ENCODE measurements at regions of chr5 and their contacts with region 1.

Region 1: GRCh38 chr5:127030259-127031146 is at the start of gene MARCHF3:
- DNase-seq: peak; percentile 97 to 98 (median 98)
- ATAC-seq: peak; percentile 94
- H3K4me3 ChIP-seq: peak within 1 kb of the TSS; percentile 89
- H3K27ac ChIP-seq: peak within 1 kb of the TSS; percentile 89
- H3K4me1 ChIP-seq: peaks cover 26 to 31% of the 10 kb centered on the region in 2 experiments
- H3K27me3 ChIP-seq: no peaks in the 10 kb centered on the region
- CTCF ChIP-seq: peak; percentile 46 to 57 (median 49); a peak in 5 of 6 replicates
- EP300 ChIP-seq: no peak
- POLR2A ChIP-seq: peak; percentile 97
- RAD21 ChIP-seq: peak; percentile 5 to 33; a peak in 3 of 4 replicates
- polyA plus RNA-seq, gene MARCHF3: 5.6 to 7.6 TPM

Region 2: DNA sequence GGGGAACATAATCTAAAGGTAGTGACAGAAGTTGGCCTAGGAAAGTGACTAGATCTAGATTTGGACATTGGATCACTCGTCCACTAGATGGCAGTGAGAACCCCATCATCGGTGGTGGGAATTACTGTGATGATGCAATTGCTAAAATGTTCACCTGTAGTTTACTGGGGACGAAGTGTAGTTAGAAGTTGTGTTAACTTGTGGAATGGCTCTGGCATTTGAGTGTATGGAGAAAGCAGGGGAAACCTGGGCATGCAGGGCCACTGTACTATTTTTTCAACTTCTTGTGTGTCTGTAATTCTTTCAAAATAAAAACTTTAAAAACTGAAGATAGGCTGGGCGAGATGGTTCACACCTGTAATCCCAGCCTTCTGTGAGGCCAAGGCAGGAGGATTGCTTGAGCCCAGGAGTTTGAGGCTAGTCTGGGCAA is 354.3 kb before region 1 on chr5:
- CTCF ChIA-PET with region 1: no interaction called
- POLR2A ChIA-PET with region 1: interaction called, 4 read pairs
- in situ Hi-C with region 1: no loop called
- intact Hi-C with region 1: loop called (anchors 5 kb)
- DNase-seq: peak; percentile 80 to 88 (median 84)
- ATAC-seq: peak; percentile 61
- H3K4me3 ChIP-seq: no peak overlapping the region
- H3K27ac ChIP-seq: no peak overlapping the region; the same call in 2 of the 3 replicates
- H3K4me1 ChIP-seq: peaks cover 19 to 34% of the 10 kb centered on the region in 2 experiments
- H3K27me3 ChIP-seq: no peaks in the 10 kb centered on the region
- CTCF ChIP-seq: peak; percentile 80 to 95 (median 83)
- EP300 ChIP-seq: 0 out of 2 replicates have a peak, but pooled peaks have one; percentile 61
- POLR2A ChIP-seq: no peak
- RAD21 ChIP-seq: peak; percentile 96 to 99

Region 3: DNA sequence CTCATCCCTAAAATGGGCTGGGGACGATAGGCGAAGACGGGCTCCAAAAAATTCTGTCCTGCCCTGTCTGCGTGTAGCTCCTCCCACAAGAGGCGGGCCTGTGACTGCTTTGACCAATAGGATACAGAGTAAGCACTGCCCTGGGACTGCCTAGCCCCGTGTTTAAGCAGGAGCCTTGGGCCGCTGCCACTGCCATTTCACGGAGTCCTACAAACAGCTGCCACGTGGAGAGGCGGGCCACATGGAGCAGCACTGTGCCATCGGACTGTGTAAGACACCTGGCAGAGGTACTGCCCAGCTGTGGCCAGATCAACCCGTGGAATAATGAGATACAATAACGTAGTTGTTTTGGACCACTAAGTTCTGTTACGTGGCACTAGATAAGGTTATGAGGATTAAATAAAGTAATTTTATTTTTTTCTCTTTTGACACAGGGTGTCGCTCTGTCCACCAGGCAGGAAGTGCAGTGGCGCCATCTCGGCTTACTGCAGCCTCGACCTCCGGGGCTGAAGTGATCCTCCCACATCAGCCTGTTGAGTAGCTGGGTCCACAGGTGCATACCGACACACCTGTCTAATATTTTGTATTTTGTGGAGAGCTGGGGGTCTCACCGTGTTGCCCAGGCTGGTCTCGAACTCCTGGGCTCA is 166.3 kb before region 1 on chr5:
- CTCF ChIA-PET with region 1: no interaction called
- POLR2A ChIA-PET with region 1: interaction called, 5 read pairs
- in situ Hi-C with region 1: no loop called
- intact Hi-C with region 1: loop called (anchors 5 kb)
- DNase-seq: peak; percentile 84 to 94 (median 88)
- ATAC-seq: peak; percentile 98
- H3K4me3 ChIP-seq: 0 out of 2 replicates have a peak overlapping the region, but pooled peaks have one; percentile 8
- H3K27ac ChIP-seq: peak overlapping the region; percentile 66
- H3K4me1 ChIP-seq: peaks cover 6 to 14% of the 10 kb centered on the region in 2 experiments; a peak in 2 of 5 replicates
- H3K27me3 ChIP-seq: no peaks in the 10 kb centered on the region
- CTCF ChIP-seq: peak; percentile 44 to 79 (median 59); a peak in 5 of 6 replicates
- EP300 ChIP-seq: no peak
- POLR2A ChIP-seq: peak; percentile 63
- RAD21 ChIP-seq: peak; percentile 23 to 48

Region 4: DNA sequence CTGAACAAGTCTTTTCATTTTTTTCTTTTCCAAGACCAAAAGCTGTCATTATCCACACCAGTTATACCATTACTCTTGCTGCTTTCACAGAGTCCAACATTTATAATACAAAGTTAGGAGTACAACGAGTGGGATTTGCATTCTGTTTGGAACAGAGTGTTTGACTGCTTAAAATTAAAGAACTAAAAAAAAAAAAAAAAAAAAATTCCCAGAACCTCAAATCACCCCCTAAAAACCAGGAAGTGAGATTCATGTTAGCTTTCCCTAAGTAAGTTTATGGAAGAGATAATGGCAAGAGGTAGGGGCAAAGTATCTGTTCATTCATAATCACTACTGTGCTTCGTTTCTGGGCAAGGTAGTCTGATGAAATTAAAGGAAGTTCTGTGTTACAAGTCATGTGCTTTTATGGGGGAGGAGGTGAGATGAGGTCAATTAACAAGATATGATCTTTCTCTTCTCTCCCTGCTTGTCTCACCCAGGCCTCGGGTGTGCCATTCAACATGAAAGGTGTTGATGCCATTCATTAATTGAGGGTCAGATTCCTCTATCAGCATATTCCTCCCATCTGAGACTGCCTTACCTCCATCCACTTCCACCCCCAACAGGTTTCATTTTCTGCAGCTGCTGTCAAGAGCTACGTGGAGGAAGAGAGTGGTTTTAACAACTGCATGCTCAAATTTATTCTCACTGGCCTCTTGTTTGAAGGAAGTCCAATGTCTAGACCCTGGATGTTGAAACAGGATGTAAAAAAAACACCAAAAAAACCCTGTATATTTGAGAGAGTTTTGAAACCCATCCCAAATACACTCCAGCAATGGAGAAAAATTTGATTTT is 58.2 kb before region 1 on chr5:
- CTCF ChIA-PET with region 1: no interaction called
- POLR2A ChIA-PET with region 1: interaction called, 4 read pairs
- in situ Hi-C with region 1: no loop called
- intact Hi-C with region 1: loop called (anchors 1 kb)
- DNase-seq: peak; percentile 53 to 70 (median 60)
- ATAC-seq: peak; percentile 53
- H3K4me3 ChIP-seq: no peak overlapping the region
- H3K27ac ChIP-seq: peak overlapping the region; percentile 79
- H3K4me1 ChIP-seq: peaks cover 38 to 75% of the 10 kb centered on the region in 2 experiments
- H3K27me3 ChIP-seq: no peaks in the 10 kb centered on the region
- CTCF ChIP-seq: no peak
- EP300 ChIP-seq: peak; percentile 94
- POLR2A ChIP-seq: no peak; the same call in 1 of the 2 replicates
- RAD21 ChIP-seq: no peak; a peak in 2 of 4 replicates

Region 5: DNA sequence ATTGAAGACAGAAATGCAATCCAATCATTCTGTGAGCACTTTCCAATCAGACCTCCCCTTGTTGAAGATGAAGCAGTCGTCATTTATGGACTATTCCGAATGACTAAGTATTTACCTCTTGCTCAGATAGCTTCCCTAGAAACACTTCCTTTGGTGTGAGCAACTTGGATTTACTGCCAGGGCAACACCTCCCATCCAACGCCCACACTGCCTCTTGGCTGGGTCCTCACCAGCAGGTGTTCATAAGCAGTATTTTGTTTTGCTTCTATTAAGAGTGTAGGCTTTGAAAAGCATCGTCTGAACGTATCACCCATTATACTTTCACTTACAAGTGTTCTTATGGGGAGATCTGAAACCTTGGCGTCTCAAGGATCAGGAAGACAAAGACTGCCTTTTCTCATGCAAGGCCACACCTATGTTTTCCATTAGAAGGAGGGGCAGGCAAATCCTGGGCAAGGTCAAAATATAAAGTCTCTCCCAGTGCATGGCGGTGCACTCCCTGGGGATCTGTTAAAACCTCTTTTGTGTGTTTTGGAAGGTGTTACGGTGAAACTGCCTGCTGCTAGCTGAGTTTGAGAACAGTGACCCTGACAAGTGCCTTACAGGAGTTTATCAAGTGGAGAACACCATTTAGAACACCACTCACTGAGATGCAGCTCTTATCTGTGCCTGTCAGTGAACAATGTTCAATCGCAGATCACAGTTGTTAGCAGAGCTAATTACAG is 10.5 kb after region 1 on chr5:
- CTCF ChIA-PET with region 1: no interaction called
- POLR2A ChIA-PET with region 1: interaction called, 11 read pairs
- in situ Hi-C with region 1: no loop called
- intact Hi-C with region 1: no loop called
- DNase-seq: peak in 2 of 4 experiments; percentile 26 to 39
- ATAC-seq: peak; percentile 73
- H3K4me3 ChIP-seq: no peak overlapping the region
- H3K27ac ChIP-seq: no peak overlapping the region
- H3K4me1 ChIP-seq: peaks cover 0 to 10% of the 10 kb centered on the region in 2 experiments; a peak in 2 of 5 replicates
- H3K27me3 ChIP-seq: no peaks in the 10 kb centered on the region
- CTCF ChIP-seq: no peak
- EP300 ChIP-seq: no peak
- POLR2A ChIP-seq: no peak
- RAD21 ChIP-seq: no peak

Measured in K562 (cell line).